B cell (primary cell): ENCODE measurements at regions of chr15 and their contacts with region 1.

Region 1: DNA sequence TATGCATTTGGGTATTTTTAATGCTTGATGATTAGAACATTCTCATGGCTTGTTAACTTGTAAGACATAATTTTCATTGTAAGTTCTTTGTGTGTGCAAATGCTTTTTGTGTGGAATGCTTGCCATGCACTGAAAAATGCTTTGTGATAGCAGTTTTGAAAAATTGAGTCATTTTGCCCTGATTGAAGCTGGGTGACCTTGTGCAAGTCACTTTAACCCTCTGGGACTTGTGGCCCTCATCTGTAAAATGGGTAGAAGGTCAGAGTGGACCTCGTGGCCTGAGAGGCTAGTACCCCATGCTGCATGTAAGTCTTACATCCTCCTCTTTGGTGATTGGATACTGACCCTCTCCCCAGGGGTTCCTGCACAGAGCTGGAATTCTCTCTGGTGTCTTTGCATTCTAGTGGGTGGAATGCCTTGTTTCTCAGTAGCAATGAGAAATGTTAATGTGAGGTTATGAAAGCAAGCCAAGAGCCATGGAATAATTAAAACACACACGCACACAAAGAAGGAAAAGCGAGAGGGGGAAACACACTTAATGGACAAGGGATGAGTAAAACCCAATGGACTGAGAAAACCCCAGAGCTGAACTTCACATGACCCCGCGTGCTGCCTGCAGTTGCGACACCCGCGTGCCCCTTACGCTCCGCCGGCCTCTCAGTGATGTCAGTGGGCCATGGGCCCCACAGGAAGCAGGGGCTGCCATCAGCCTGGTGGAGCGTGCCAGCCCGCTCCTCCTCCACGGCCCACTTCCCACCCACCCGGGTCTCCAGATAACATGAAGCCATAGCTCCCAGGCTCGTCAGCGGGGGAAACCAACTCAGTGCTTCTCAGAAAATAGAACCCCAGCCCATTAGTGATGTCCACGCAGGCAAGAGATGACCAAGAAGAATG is 44.0 kb downstream of the SMAD3 start:
- DNase-seq: peak; percentile 91
- ATAC-seq: peak; percentile 81
- H3K4me3 ChIP-seq: peak overlapping the region in 2 of 5 experiments; percentile 4 to 47
- H3K4me3 Mint-ChIP-seq: peak overlapping the region; percentile 76
- H3K27ac ChIP-seq: peak overlapping the region; percentile 88 to 98
- H3K27ac Mint-ChIP-seq: peak overlapping the region; percentile 94
- H3K4me1 ChIP-seq: peaks cover 81 to 84% of the 10 kb centered on the region in 2 donors
- H3K4me1 Mint-ChIP-seq: peaks cover 17% of the 10 kb centered on the region
- H3K27me3 ChIP-seq: no peaks in the 10 kb centered on the region
- H3K27me3 Mint-ChIP-seq: no peaks in the 10 kb centered on the region
- CTCF ChIP-seq: no peak

Region 2: GRCh38 chr15:67091071-67091979 is 18.1 kb before region 1 on chr15:
- CTCF ChIA-PET with region 1: interaction called, 109 read pairs
- POLR2A ChIA-PET with region 1: interaction called, 10 read pairs
- intact Hi-C with region 1: loop called (anchors 1 kb)
- DNase-seq: peak; percentile 71
- ATAC-seq: peak; percentile 44
- H3K4me3 ChIP-seq: peak overlapping the region in 1 of 5 experiments; percentile 10
- H3K4me3 Mint-ChIP-seq: peak overlapping the region; percentile 79
- H3K27ac ChIP-seq: peak overlapping the region; percentile 88 to 90
- H3K27ac Mint-ChIP-seq: peak overlapping the region; percentile 97
- H3K4me1 ChIP-seq: peaks cover 97 to 98% of the 10 kb centered on the region in 2 donors
- H3K4me1 Mint-ChIP-seq: peaks cover 97% of the 10 kb centered on the region
- H3K27me3 ChIP-seq: no peaks in the 10 kb centered on the region
- H3K27me3 Mint-ChIP-seq: no peaks in the 10 kb centered on the region
- CTCF ChIP-seq: no peak

Region 3: GRCh38 chr15:67120839-67121643 is 11.7 kb after region 1 on chr15:
- CTCF ChIA-PET with region 1: interaction called, 17 read pairs
- POLR2A ChIA-PET with region 1: interaction called, 40 read pairs
- intact Hi-C with region 1: loop called (anchors 1 kb)
- DNase-seq: peak; percentile 94
- ATAC-seq: peak; percentile 89
- H3K4me3 ChIP-seq: peak overlapping the region; percentile 9 to 54 (median 24)
- H3K4me3 Mint-ChIP-seq: peak overlapping the region; percentile 82
- H3K27ac ChIP-seq: peak overlapping the region; percentile 90 to 91
- H3K27ac Mint-ChIP-seq: peak overlapping the region; percentile 96
- H3K4me1 ChIP-seq: peaks cover 83 to 93% of the 10 kb centered on the region in 2 donors
- H3K4me1 Mint-ChIP-seq: peaks cover 91% of the 10 kb centered on the region
- H3K27me3 ChIP-seq: no peaks in the 10 kb centered on the region
- H3K27me3 Mint-ChIP-seq: no peaks in the 10 kb centered on the region
- CTCF ChIP-seq: no peak